Common myeloid progenitor, CD34-positive (primary cell): ENCODE measurements at regions of chr7 and their contacts with region 1.

Region 1: DNA sequence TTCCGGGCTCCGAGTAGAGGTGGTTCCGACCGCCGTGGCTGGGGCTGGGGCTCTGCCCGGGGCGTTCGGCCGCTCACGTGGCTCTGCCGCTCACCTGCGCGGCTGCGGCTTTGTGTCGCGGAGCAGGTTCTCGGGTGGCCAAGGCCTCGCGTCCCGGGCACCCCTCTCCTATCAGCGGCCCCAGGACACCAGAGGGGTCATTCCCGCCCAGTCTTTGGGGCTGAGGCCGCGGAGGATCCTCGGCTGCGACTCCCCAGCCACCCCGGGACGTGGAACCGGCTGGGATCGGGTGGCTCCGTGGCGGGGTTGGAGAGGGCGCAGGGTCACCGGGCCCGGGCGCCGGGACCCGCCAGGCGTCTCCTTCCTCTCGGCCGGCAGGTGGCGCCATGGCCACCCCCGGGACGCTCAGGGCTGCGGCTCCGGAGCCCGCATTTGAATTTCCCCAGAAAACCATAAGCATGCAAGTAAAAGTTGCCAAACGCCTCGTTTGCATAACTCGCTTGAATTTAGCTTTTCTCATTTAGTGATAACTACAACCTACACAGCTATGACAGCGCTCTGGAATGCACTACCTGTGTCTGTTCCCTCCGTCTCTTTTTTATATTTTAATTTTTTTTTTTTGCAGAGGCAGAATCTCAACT is 1.2 kb downstream of the COL26A1 start:
- DNase-seq: peak; percentile 72 to 86 (median 84)
- H3K4me3 ChIP-seq: peak overlapping the region in 6 of 7 experiments; percentile 25 to 74 (median 50)
- H3K27ac ChIP-seq: no peak overlapping the region
- H3K4me1 ChIP-seq: peaks cover 0 to 16% (median 9%) of the 10 kb centered on the region in 4 experiments
- H3K27me3 ChIP-seq: peaks cover 0 to 32% (median 11%) of the 10 kb centered on the region in 5 experiments

Region 2: DNA sequence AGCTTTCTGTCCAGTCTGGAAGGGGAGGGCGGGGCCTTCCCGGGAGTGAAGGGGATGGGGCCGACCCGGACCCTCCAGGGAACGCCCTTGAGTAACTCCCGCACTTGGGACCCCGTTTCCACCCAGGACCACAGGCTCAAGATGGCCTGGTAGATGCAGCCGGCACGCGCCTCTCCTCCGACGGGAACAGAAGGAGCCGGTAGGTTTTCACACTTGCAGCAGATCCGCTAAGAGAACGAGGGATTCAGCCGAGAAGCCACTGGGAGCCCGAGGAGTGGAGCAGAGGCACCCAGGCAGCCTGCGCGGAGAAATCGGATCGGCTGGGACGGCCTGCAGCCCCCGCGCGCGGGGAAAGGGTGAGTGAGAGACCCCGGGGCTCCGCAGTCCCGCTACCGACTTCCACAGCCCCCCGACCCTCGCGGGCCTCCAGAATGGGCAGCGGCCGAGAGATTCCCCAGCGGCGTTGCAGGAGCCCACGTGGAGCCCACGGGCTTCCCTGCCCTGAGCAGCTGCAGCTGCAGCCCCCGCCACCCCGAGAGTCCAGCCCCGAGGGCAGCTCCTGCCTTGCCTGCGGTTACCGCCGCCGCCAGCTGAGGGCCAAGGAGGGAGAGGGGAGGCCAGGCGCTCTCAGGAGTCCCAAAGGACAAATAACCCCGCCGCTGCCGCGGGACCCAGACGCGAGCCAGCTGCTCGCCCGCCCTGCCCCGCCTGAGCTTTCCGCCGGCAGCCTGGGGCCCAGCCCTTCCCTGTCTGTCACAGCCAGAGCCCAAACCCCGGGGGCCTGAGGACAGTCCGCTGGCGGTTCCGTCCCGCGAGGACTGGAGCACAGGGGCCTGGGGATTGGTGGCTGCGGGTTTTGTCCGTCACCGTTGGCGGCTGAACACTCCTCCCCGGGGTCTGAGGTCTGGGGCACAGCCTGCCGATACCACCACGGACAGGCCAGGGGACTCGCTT is 64.1 kb before region 1 on chr7:
- CTCF ChIA-PET with region 1: no interaction called
- POLR2A ChIA-PET with region 1: no interaction called
- DNase-seq: no peak
- H3K4me3 ChIP-seq: no peak overlapping the region
- H3K27ac ChIP-seq: no peak overlapping the region
- H3K4me1 ChIP-seq: peaks cover 0 to 6% (median 1%) of the 10 kb centered on the region in 4 experiments
- H3K27me3 ChIP-seq: peaks cover 12 to 82% (median 45%) of the 10 kb centered on the region in 5 experiments

Region 3: GRCh38 chr7:101373812-101374614 is 10.2 kb after region 1 on chr7:
- CTCF ChIA-PET with region 1: interaction called, 13 read pairs
- POLR2A ChIA-PET with region 1: no interaction called
- DNase-seq: no peak
- H3K4me3 ChIP-seq: no peak overlapping the region
- H3K27ac ChIP-seq: no peak overlapping the region
- H3K4me1 ChIP-seq: peaks cover 0 to 10% (median 5%) of the 10 kb centered on the region in 4 experiments
- H3K27me3 ChIP-seq: peaks cover 0 to 14% (median 11%) of the 10 kb centered on the region in 5 experiments

Region 4: GRCh38 chr7:101410743-101411507 is 47.1 kb after region 1 on chr7:
- CTCF ChIA-PET with region 1: interaction called, 33 read pairs
- POLR2A ChIA-PET with region 1: no interaction called
- DNase-seq: peak in 2 of 3 donors; percentile 36 to 69
- H3K4me3 ChIP-seq: peak overlapping the region in 2 of 7 experiments; percentile 30 to 47
- H3K27ac ChIP-seq: no peak overlapping the region
- H3K4me1 ChIP-seq: peaks cover 0 to 13% (median 11%) of the 10 kb centered on the region in 4 experiments
- H3K27me3 ChIP-seq: no peaks in the 10 kb centered on the region

Region 5: GRCh38 chr7:101436857-101437576 is 73.2 kb after region 1 on chr7:
- CTCF ChIA-PET with region 1: interaction called, 25 read pairs
- POLR2A ChIA-PET with region 1: no interaction called
- DNase-seq: no peak
- H3K4me3 ChIP-seq: no peak overlapping the region
- H3K27ac ChIP-seq: no peak overlapping the region
- H3K4me1 ChIP-seq: no peaks in the 10 kb centered on the region
- H3K27me3 ChIP-seq: peaks cover 0 to 8% (median 0%) of the 10 kb centered on the region in 5 experiments

Region 6: GRCh38 chr7:101507791-101508252 is 144.0 kb after region 1 on chr7:
- CTCF ChIA-PET with region 1: interaction called, 11 read pairs
- POLR2A ChIA-PET with region 1: no interaction called
- DNase-seq: peak; percentile 79 to 86 (median 80)
- H3K4me3 ChIP-seq: peak overlapping the region in 3 of 7 experiments; percentile 10 to 57 (median 19)
- H3K27ac ChIP-seq: no peak overlapping the region
- H3K4me1 ChIP-seq: peaks cover 0 to 14% (median 11%) of the 10 kb centered on the region in 4 experiments
- H3K27me3 ChIP-seq: no peaks in the 10 kb centered on the region